CD4-positive, alpha-beta memory T cell (primary cell): ENCODE measurements at regions of chr22 and their contacts with region 1.

Region 1: GRCh38 chr22:37472418-37473006 is 13.7 kb downstream of the MFNG start:
- DNase-seq: peak; percentile 29 to 55 (median 39)
- H3K4me3 ChIP-seq: no peak overlapping the region
- H3K4me3 Mint-ChIP-seq: no peak overlapping the region
- H3K27ac ChIP-seq: no peak overlapping the region
- H3K27ac Mint-ChIP-seq: peak overlapping the region in 3 of 7 donors; percentile 37 to 64 (median 61)
- H3K4me1 ChIP-seq: no peaks in the 10 kb centered on the region
- H3K4me1 Mint-ChIP-seq: peaks cover 0 to 12% (median 7%) of the 10 kb centered on the region in 4 donors
- H3K27me3 ChIP-seq: no peaks in the 10 kb centered on the region
- H3K27me3 Mint-ChIP-seq: no peaks in the 10 kb centered on the region

Region 2: GRCh38 chr22:37457093-37457893 is 15.2 kb before region 1 on chr22:
- CTCF ChIA-PET with region 1: interaction called, 15 read pairs
- POLR2A ChIA-PET with region 1: no interaction called
- intact Hi-C with region 1: no loop called
- DNase-seq: peak; percentile 74 to 80 (median 77)
- H3K4me3 ChIP-seq: no peak overlapping the region
- H3K4me3 Mint-ChIP-seq: no peak overlapping the region
- H3K27ac ChIP-seq: no peak overlapping the region
- H3K27ac Mint-ChIP-seq: peak overlapping the region in 6 of 7 donors; percentile 15 to 57 (median 22)
- H3K4me1 ChIP-seq: peaks cover 3% of the 10 kb centered on the region
- H3K4me1 Mint-ChIP-seq: peaks cover 0 to 7% (median 5%) of the 10 kb centered on the region in 4 donors
- H3K27me3 ChIP-seq: no peaks in the 10 kb centered on the region
- H3K27me3 Mint-ChIP-seq: no peaks in the 10 kb centered on the region

Region 3: GRCh38 chr22:37492428-37493344 is 20.2 kb after region 1 on chr22:
- CTCF ChIA-PET with region 1: interaction called, 185 read pairs
- POLR2A ChIA-PET with region 1: interaction called, 9 read pairs
- intact Hi-C with region 1: no loop called
- DNase-seq: peak; percentile 45 to 59 (median 53)
- H3K4me3 ChIP-seq: no peak overlapping the region
- H3K4me3 Mint-ChIP-seq: peak overlapping the region in 1 of 8 donors; percentile 25
- H3K27ac ChIP-seq: no peak overlapping the region
- H3K27ac Mint-ChIP-seq: peak overlapping the region in 6 of 7 donors; percentile 12 to 94 (median 50)
- H3K4me1 ChIP-seq: peaks cover 19% of the 10 kb centered on the region
- H3K4me1 Mint-ChIP-seq: peaks cover 10 to 48% (median 28%) of the 10 kb centered on the region in 4 donors
- H3K27me3 ChIP-seq: no peaks in the 10 kb centered on the region
- H3K27me3 Mint-ChIP-seq: no peaks in the 10 kb centered on the region

Region 4: GRCh38 chr22:37498289-37498909 is 25.9 kb after region 1 on chr22:
- CTCF ChIA-PET with region 1: interaction called, 185 read pairs
- POLR2A ChIA-PET with region 1: interaction called, 4 read pairs
- intact Hi-C with region 1: loop called (anchors 1 kb)
- DNase-seq: peak; percentile 68 to 72 (median 70)
- H3K4me3 ChIP-seq: no peak overlapping the region
- H3K4me3 Mint-ChIP-seq: no peak overlapping the region
- H3K27ac ChIP-seq: no peak overlapping the region
- H3K27ac Mint-ChIP-seq: no peak overlapping the region
- H3K4me1 ChIP-seq: peaks cover 19% of the 10 kb centered on the region
- H3K4me1 Mint-ChIP-seq: peaks cover 8 to 25% (median 16%) of the 10 kb centered on the region in 4 donors
- H3K27me3 ChIP-seq: peaks cover 3% of the 10 kb centered on the region
- H3K27me3 Mint-ChIP-seq: no peaks in the 10 kb centered on the region

Region 5: GRCh38 chr22:37525073-37525748 is 52.7 kb after region 1 on chr22:
- CTCF ChIA-PET with region 1: no interaction called
- POLR2A ChIA-PET with region 1: no interaction called
- intact Hi-C with region 1: no loop called
- DNase-seq: no peak
- H3K4me3 ChIP-seq: no peak overlapping the region
- H3K4me3 Mint-ChIP-seq: no peak overlapping the region
- H3K27ac ChIP-seq: no peak overlapping the region
- H3K27ac Mint-ChIP-seq: no peak overlapping the region
- H3K4me1 ChIP-seq: peaks cover 4% of the 10 kb centered on the region
- H3K4me1 Mint-ChIP-seq: peaks cover 0 to 8% (median 2%) of the 10 kb centered on the region in 4 donors
- H3K27me3 ChIP-seq: peaks cover 16% of the 10 kb centered on the region
- H3K27me3 Mint-ChIP-seq: peaks cover 26 to 35% of the 10 kb centered on the region in 2 donors

Region 6: DNA sequence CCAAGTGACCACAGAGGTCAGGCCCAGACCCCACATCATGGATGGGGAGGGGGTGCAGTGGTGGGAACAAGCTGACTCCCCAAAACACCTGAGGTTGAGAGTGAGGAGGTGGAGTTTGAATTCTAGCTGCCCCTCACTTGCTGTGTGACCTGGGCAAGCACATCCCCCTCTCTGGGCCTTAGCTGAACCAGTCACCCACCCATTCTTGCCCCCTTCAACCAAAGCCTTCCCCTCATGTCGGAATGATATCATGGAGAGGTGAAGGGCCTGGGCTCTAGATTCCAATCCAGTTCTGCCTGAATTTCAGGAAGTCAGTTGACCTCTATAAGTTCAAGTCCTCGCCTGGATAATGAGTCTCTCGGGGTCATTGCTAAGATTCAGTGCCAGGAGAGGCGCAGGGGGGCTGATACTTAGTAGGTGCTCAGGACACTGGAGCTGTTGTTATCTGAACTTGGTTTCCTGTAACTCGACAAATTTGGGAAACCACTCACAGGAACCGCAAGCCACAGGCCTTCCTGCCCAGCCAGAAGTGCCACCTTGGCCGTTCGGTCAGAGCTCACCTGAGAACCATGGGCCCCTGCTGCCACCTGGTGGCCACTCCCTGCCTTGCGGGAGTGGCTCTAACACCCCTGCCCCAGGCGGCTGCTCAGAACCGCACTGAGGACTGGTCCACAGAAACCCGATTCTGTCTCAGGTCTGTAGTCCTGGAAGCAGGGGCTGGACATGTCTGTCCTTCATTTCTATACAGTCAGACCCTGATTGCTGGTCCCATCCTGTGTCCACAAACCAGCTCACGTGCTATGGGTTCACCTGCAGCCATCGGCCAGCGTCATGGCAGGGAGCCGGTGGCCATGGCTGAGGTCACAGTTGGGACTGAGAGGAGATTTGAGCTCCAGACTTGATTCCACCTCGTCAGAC is 94.7 kb after region 1 on chr22:
- CTCF ChIA-PET with region 1: interaction called, 15 read pairs
- POLR2A ChIA-PET with region 1: no interaction called
- intact Hi-C with region 1: no loop called
- DNase-seq: peak; percentile 87 to 91 (median 89)
- H3K4me3 ChIP-seq: peak overlapping the region; percentile 6 to 15
- H3K4me3 Mint-ChIP-seq: peak overlapping the region; percentile 58 to 85 (median 70)
- H3K27ac ChIP-seq: no peak overlapping the region
- H3K27ac Mint-ChIP-seq: peak overlapping the region; percentile 8 to 81 (median 57)
- H3K4me1 ChIP-seq: peaks cover 23% of the 10 kb centered on the region
- H3K4me1 Mint-ChIP-seq: peaks cover 11 to 36% (median 25%) of the 10 kb centered on the region in 4 donors
- H3K27me3 ChIP-seq: peaks cover 11% of the 10 kb centered on the region
- H3K27me3 Mint-ChIP-seq: peaks cover 14 to 24% of the 10 kb centered on the region in 2 donors

Region 7: GRCh38 chr22:37716708-37717107 is 244.2 kb after region 1 on chr22:
- CTCF ChIA-PET with region 1: no interaction called
- POLR2A ChIA-PET with region 1: no interaction called
- intact Hi-C with region 1: no loop called
- DNase-seq: no peak
- H3K4me3 ChIP-seq: no peak overlapping the region
- H3K4me3 Mint-ChIP-seq: no peak overlapping the region
- H3K27ac ChIP-seq: no peak overlapping the region
- H3K27ac Mint-ChIP-seq: no peak overlapping the region
- H3K4me1 ChIP-seq: no peaks in the 10 kb centered on the region
- H3K4me1 Mint-ChIP-seq: no peaks in the 10 kb centered on the region
- H3K27me3 ChIP-seq: no peaks in the 10 kb centered on the region
- H3K27me3 Mint-ChIP-seq: no peaks in the 10 kb centered on the region

Region 8: GRCh38 chr22:38040953-38041759 is 568.6 kb after region 1 on chr22:
- CTCF ChIA-PET with region 1: no interaction called
- POLR2A ChIA-PET with region 1: no interaction called
- intact Hi-C with region 1: no loop called
- DNase-seq: no peak
- H3K4me3 ChIP-seq: no peak overlapping the region
- H3K4me3 Mint-ChIP-seq: no peak overlapping the region
- H3K27ac ChIP-seq: no peak overlapping the region
- H3K27ac Mint-ChIP-seq: peak overlapping the region in 1 of 7 donors; percentile 16
- H3K4me1 ChIP-seq: no peaks in the 10 kb centered on the region
- H3K4me1 Mint-ChIP-seq: no peaks in the 10 kb centered on the region
- H3K27me3 ChIP-seq: no peaks in the 10 kb centered on the region
- H3K27me3 Mint-ChIP-seq: peaks cover 1 to 2% of the 10 kb centered on the region in 2 donors